Psoas muscle (tissue), 8 donors: ENCODE measurements at regions of chr17 and their contacts with region 1.

Region 1: DNA sequence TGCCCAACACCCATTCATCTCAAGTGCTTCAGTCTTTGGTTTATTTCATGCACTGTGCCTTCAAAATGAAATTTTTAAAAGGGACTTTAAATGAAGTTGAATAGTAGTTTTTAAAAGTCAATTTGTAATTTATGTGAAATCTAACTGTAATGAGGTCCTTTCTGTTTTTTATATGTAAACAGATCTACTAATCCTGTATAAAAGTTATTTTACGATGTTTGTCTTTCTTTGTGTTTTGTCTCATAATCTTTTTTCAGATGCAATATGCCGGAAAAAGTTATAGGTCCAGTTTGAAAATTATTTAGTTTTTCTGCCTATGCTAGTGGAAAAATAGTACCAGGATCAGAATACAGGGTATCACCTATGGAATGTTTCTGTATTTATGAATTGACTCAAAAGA is 8.7 kb upstream of the GOSR1 start:
- DNase-seq: no peak
- ATAC-seq: no peak
- H3K4me3 ChIP-seq: no peak overlapping the region
- H3K27ac ChIP-seq: no peak overlapping the region
- H3K4me1 ChIP-seq: no peaks in the 10 kb centered on the region
- H3K27me3 ChIP-seq: peaks cover 0 to 2% (median 0%) of the 10 kb centered on the region in 3 donors
- CTCF ChIP-seq: no peak

Region 2: GRCh38 chr17:30323895-30324319 is 144.6 kb before region 1 on chr17:
- intact Hi-C with region 1: loop called in 1 of 2 experiments (anchors 5 kb)
- DNase-seq: peak in 1 of 2 donors; percentile 20
- ATAC-seq: peak in 1 of 4 donors; percentile 47
- H3K4me3 ChIP-seq: no peak overlapping the region
- H3K27ac ChIP-seq: no peak overlapping the region
- H3K4me1 ChIP-seq: no peaks in the 10 kb centered on the region
- H3K27me3 ChIP-seq: peaks cover 0 to 11% (median 2%) of the 10 kb centered on the region in 3 donors
- CTCF ChIP-seq: no peak

Region 3: DNA sequence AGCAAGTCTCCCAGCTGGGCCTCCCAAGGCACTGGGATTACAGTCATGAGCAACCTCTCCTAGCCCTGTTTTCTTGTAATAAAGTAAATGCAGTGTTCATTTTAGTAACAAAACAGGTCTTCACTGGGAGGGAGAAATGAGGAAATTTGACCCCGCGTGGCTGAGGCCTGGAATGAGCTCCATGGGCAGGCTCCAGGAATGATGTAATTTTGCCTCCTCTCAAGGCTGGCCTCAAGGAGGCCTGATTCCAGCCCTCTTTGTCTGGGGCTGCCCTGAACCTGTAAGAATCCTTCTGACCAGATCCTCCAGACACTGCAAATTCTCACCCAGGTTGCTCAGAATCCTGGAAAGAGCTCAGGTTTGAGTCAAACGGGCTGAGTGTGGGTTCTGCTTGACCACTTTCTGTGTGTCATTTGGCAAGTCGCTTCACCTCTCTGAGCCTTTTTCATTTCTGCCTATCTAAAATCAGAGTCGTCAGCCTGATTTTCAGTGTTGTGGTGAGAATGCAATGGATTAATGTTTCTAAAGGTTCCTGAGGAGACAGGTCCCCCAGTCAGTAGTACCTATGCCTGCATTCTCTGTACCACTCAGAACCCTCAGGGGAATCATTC is 980.1 kb after region 1 on chr17:
- intact Hi-C with region 1: no loop called
- DNase-seq: no peak
- ATAC-seq: no peak
- H3K4me3 ChIP-seq: no peak overlapping the region
- H3K27ac ChIP-seq: no peak overlapping the region
- H3K4me1 ChIP-seq: no peaks in the 10 kb centered on the region
- H3K27me3 ChIP-seq: no peaks in the 10 kb centered on the region
- CTCF ChIP-seq: no peak